BJ (cell line): ENCODE measurements at regions of chr11 and their contacts with region 1.

Region 1: DNA sequence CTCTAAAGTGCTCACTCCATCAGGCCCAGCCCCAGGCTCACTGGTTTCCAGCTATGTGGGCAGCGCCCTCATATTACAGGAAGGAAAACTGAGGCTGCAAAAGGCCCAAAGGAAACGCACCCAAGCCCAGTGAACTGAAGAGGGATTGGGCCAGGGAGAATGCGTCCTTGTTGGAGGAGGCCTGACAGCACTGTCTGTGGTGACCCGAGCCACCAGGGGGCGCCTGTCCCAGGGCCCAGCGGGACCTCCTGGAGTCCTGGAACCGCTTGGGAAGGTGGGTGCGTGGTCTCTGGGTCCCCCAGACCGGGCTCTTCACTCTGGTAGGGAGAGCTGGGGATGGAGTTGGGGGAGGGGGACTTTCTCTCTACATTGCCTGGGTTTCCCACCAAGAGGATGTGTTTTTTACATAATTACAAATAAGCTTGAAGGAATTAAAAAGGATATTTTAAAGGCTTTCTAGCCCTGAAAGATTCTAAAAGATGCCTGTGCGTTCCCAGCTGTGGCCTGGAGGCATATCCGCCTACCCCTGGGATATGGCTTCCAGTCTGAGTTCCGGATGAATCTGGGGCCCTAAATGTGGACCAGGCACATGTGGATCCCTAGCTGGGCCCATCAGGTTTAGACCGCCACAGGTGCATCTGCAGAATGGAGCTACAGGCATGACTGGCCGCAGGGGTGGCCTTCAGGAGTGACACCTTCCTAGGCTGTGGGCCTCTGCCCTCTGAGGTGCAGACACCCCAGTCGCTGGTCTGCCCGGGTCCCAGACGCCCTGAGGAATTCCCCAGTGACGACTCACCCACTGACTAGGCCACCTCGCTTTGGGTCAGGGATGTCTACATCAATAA is 4.2 kb downstream of the SPI1 start:
- DNase-seq: no peak
- H3K4me3 ChIP-seq: no peak overlapping the region
- H3K27me3 ChIP-seq: no peaks in the 10 kb centered on the region
- CTCF ChIP-seq: peak; percentile 97

Region 2: GRCh38 chr11:47083913-47084312 is 290.2 kb before region 1 on chr11:
- CTCF ChIA-PET with region 1: no interaction called
- POLR2A ChIA-PET with region 1: no interaction called
- DNase-seq: peak; percentile 86
- H3K4me3 ChIP-seq: no peak overlapping the region
- H3K27me3 ChIP-seq: no peaks in the 10 kb centered on the region
- CTCF ChIP-seq: no peak

Region 3: DNA sequence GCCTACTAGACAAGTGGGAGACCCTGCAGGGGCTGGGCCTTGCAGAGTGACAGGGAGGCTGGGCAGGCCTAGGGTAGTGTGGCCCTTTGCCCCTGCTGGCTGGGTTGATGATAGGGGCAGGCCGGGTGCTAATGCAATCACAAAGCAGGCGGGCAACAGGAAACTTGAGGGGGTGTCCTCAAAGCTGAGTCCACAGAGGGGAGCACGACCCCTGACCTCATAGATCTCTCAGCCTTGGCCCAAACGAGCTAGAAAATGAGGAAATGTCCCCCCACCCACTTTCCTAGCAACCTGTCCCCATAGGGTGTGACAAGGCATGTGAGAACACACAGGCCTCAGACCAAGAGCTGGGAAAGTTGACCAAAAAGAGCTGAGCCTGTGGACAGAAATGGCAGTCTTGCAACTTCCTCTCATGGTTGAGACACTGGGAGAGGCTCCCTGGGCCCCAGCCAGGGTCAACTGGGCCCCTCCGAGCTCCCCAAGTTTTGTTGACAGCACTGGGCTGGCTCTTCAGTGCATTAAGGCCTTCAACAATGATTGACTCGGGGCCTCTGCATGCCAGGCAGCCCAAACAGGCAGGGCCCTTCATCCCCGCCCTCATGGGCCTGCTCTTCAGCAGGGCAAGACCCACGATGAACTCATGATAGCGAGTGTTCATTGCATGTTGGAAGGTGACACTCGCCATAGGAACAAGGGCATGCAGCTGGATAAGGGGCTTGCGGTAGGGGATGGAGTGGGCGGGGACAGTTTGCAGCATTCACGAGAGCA is 14.0 kb after region 1 on chr11:
- CTCF ChIA-PET with region 1: interaction called, 32 read pairs
- POLR2A ChIA-PET with region 1: no interaction called
- DNase-seq: no peak
- H3K4me3 ChIP-seq: no peak overlapping the region
- H3K27me3 ChIP-seq: peaks cover 2% of the 10 kb centered on the region; the same call in 1 of the 2 replicates
- CTCF ChIP-seq: no peak

Region 4: DNA sequence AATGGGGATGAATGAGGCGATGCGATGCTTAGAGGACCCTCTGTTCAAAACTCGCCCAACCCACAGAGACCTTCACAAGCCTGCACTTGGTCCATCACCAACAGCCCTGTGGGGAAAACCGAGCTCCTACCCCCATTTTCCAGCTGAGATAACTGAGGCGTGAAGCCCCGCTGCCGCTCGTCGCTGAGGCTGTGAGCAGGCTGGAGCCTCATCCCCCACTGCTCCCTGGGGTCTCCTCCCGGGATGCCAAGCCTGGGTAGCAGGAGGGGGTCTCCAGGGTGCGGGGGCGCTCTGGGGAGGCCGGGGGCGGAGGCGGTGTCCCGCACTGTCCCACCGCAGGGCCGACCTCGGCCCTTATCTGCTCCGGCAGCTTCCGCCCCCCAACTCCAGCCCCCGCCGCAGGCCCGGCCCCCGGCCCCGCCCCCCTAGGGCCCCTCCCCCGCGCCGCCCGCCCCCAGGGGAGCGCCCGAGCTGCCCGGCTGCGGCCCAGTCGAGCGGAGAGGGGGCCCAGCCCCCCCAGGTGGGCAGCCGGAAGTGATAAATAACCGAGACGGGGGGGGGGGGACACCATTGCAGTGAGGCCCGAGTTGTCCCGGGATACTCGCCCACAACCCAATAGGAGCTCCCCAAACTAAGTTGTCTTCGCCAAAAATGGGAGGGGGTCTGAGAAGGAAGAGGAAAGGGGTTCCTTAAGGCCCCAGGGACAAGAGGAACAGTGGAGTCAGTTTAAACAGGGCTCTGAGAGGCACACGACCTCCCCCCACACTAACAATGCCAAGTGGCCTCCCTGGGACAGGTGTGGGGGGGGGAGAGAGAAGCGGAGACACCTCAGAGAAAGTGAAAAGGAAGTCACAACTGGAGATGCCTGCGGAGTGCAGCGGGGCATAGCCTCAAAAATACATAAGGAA is 26.0 kb after region 1 on chr11:
- CTCF ChIA-PET with region 1: interaction called, 20 read pairs
- POLR2A ChIA-PET with region 1: no interaction called
- DNase-seq: no peak
- H3K4me3 ChIP-seq: peak overlapping the region; percentile 47
- H3K27me3 ChIP-seq: no peaks in the 10 kb centered on the region
- CTCF ChIP-seq: no peak

Region 5: DNA sequence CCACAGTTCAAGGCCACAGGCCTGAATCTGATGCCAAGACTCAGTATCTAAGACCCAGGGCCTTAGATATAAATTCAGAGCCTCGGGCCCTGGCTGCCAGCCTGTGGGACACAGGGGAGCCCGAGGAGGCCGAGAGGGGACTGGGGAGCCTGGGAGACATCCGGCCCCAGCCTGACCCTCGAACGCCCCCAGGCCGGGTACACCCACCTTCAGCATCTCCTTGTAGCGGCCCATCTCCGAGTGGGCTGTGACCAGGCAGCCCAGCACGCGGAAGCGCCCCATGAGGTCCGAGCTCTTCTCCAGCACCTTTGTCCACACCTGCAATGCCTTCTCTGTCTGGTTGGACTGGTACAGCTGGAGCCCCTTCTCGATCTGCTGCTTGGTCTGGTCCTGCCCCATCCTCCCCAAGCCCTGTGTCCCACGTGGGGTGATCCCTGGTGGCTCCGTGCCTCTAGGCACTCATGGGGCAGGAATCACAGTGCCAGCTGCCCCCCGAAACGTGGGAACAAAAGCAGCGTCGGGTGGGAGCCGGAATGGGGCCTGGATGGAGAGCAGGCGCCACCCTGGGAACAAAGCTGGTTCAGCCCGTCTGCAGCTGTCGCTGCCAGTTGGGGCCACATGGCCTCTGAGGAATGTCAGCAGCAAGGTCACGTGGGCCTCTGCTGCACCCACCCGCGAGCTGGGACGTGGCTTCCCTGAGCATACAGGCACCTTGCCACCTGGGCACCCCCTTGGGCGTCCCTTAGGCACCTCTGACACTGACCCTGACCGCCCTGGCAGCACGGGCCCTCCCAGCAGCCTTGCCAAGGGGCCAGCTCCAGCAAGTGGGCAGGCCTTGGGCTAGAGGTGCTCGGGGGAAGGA is 74.7 kb after region 1 on chr11 and contains the start of gene RAPSN:
- CTCF ChIA-PET with region 1: interaction called, 52 read pairs
- POLR2A ChIA-PET with region 1: no interaction called
- DNase-seq: no peak
- H3K4me3 ChIP-seq: no peak within 1 kb of the TSS
- H3K27me3 ChIP-seq: no peaks in the 10 kb centered on the region
- CTCF ChIP-seq: no peak
- polyA plus RNA-seq, gene RAPSN: 0.10 and 0.12 TPM in 2 replicates

Region 6: DNA sequence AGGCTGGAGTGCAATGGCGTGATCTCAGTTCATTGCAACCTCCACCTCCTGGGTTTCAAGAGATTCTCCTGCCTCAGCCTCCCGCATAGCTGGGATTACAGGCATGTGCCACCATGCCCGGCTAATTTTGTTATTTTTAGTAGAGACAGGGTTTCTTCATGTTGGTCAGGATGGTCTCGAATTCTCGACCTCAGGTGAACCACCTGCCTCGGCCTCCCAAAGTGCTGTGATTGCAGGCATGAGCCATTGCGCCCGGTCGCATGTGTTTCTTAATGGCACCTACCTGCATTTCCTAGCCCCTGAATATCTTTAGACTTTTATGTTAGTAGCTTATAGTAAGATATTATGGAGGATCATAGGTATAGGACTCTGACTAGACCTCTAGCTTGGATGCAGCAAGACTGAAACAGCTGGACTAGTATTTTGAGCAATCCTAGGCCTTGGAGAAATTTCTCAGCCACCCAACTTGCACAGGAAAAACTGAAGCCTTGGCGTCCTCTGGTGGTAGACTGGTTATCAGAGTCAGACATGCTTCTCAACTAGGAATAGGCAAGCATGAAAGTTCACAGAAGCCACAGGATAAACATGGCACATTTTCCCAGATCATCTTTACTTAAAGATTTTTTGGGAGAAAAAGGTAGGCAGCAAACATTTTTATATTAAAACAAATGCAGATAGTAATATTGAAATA is 242.8 kb after region 1 on chr11:
- CTCF ChIA-PET with region 1: interaction called, 18 read pairs
- POLR2A ChIA-PET with region 1: no interaction called
- DNase-seq: no peak
- H3K4me3 ChIP-seq: no peak overlapping the region
- H3K27me3 ChIP-seq: no peaks in the 10 kb centered on the region
- CTCF ChIP-seq: peak; percentile 98